ENCODE measurements at regions of chr3 and their contacts with region 1.

Region 1: GRCh38 chr3:159988617-159989271 is at the start of gene IL12A:
- DNase-seq: peak; percentile 79
- H3K4me3 Mint-ChIP-seq: peak within 1 kb of the TSS; percentile 75
- H3K27ac Mint-ChIP-seq: peak within 1 kb of the TSS; percentile 42
- H3K4me1 Mint-ChIP-seq: peaks cover 34% of the 10 kb centered on the region
- H3K27me3 Mint-ChIP-seq: peaks cover 15% of the 10 kb centered on the region
- total RNA-seq, gene IL12A: 0.53 and 0.87 TPM in 2 replicates

Region 2: GRCh38 chr3:159763602-159764489 is 224.9 kb before region 1 on chr3:
- intact Hi-C with region 1: loop called (anchors 10 kb)
- DNase-seq: peak; percentile 57
- H3K4me3 Mint-ChIP-seq: peak overlapping the region; percentile 88
- H3K27ac Mint-ChIP-seq: peak overlapping the region; percentile 84
- H3K4me1 Mint-ChIP-seq: peaks cover 16% of the 10 kb centered on the region
- H3K27me3 Mint-ChIP-seq: peaks cover 67% of the 10 kb centered on the region

Region 3: DNA sequence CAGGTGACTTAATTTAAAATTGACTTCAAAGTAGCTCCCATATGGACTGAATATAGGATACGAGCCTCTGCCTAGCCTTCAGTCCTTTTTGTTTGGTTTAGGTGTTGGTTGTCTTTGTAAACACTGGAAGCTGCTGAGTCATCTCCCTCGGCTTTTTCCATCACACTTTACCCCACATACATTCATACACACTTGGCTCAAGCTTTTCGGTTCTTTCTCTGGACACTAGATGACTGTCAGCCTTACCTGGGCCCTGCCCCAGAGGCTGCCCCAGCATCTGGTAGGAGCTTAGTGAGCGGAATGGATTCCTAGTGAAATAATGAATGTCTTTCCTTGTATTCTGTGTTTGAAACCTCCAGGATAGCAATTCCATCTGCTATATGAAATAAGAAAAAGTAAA is 201.6 kb before region 1 on chr3:
- intact Hi-C with region 1: no loop called
- DNase-seq: no peak
- H3K4me3 Mint-ChIP-seq: no peak overlapping the region
- H3K27ac Mint-ChIP-seq: no peak overlapping the region
- H3K4me1 Mint-ChIP-seq: peaks cover 6% of the 10 kb centered on the region
- H3K27me3 Mint-ChIP-seq: peaks cover 13% of the 10 kb centered on the region

Region 4: DNA sequence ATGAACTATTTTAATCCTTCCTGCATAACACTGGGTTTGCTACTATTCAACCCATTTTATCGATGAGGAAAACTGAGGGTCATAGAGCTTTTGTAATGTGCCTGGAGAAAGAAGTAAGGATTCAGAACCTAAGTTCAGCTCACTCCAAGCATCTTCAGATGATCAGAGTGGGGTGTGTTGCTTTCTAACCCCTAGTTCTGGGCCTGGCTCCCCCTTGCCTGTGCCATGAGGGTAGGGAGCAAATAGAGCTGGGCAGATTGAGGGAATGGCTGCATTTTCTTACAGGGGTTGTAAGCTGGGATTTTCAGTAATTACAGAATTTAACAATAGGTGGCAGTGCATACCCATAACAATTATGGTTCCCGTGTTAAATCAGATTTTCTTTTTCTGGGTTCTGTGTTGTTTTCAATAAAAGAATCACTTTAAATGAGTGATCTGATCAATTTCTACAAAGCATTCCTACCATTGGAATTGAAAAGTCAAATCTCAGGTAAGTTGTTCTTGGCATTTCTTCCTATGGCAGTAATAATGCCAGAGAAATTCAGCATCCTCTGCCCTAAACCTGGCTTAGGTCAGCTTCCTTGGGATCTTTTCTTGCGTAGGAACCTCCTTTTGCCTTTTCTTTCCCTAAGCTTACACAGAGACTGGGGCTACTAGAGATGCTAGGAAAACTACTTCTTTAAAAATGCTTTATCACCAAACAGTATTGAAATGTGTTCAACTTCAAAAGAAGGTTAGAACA is 103.9 kb before region 1 on chr3:
- intact Hi-C with region 1: loop called (anchors 5 kb)
- DNase-seq: no peak
- H3K4me3 Mint-ChIP-seq: no peak overlapping the region
- H3K27ac Mint-ChIP-seq: no peak overlapping the region
- H3K4me1 Mint-ChIP-seq: no peaks in the 10 kb centered on the region
- H3K27me3 Mint-ChIP-seq: peaks cover 27% of the 10 kb centered on the region

Region 5: GRCh38 chr3:159929435-159930141 is 59.2 kb before region 1 on chr3:
- intact Hi-C with region 1: loop called (anchors 5 kb)
- DNase-seq: no peak
- H3K4me3 Mint-ChIP-seq: no peak overlapping the region
- H3K27ac Mint-ChIP-seq: no peak overlapping the region
- H3K4me1 Mint-ChIP-seq: peaks cover 9% of the 10 kb centered on the region
- H3K27me3 Mint-ChIP-seq: no peaks in the 10 kb centered on the region

Region 6: GRCh38 chr3:160006282-160007163 is 17.8 kb after region 1 on chr3:
- intact Hi-C with region 1: loop called (anchors 1 kb)
- DNase-seq: no peak
- H3K4me3 Mint-ChIP-seq: no peak overlapping the region
- H3K27ac Mint-ChIP-seq: peak overlapping the region; percentile 46
- H3K4me1 Mint-ChIP-seq: peaks cover 49% of the 10 kb centered on the region
- H3K27me3 Mint-ChIP-seq: no peaks in the 10 kb centered on the region

Region 7: DNA sequence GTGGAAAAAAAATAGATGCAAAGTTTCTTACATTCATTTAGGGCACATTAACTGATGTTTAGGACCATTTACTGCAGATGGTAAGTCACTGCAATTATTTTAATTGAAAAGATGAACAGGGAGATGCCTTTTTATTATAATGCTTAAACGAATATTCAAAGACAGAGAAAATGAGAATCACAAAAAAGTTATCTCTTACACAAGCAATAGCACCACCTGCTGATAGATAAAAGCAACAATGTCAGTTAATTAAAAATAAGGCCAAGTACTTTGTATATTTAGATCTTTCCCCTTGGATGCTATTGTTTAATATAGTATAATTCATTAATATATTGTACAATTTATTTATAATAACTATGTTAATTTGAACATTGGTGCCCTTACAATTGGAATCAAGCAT is 354.4 kb after region 1 on chr3:
- intact Hi-C with region 1: loop called (anchors 5 kb)
- DNase-seq: no peak
- H3K4me3 Mint-ChIP-seq: no peak overlapping the region
- H3K27ac Mint-ChIP-seq: no peak overlapping the region
- H3K4me1 Mint-ChIP-seq: no peaks in the 10 kb centered on the region
- H3K27me3 Mint-ChIP-seq: no peaks in the 10 kb centered on the region

Region 8: DNA sequence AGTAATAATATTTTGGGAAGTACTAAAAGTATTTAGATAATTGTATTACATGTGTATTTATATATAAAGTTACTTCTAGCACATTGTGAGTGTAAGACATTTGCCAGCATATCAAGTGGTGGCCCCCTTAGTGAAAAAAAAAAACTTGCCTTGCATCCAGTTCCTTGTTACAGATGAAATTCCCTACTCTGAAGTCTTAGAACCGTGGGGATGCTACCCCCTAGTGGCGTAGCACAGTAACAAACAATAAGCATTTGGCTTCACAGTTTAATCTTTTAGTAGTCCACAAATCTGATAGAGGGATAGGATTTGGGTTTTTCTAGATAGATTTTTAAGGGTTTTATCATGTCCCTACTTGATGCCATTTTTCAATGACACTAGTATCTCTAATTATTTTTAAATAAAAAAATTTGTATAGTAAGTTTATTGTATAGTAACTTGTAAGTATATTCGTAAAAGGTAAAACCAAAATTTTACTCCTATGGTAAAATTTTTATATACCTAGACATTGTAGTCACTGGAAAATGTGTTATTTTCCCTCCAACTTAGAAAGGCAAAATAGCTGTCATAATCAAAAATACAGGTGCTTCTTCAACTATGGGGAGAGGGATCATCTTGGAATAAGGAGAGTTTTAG is 425.0 kb after region 1 on chr3:
- intact Hi-C with region 1: loop called (anchors 2 kb)
- DNase-seq: peak; percentile 60
- H3K4me3 Mint-ChIP-seq: no peak overlapping the region
- H3K27ac Mint-ChIP-seq: no peak overlapping the region
- H3K4me1 Mint-ChIP-seq: peaks cover 51% of the 10 kb centered on the region
- H3K27me3 Mint-ChIP-seq: no peaks in the 10 kb centered on the region